ENCODE measurements at regions of chr13 and their contacts with region 1.

Region 1: GRCh38 chr13:25286969-25287961 is at the start of gene MTMR6:
- DNase-seq: peak; percentile 95
- H3K4me3 Mint-ChIP-seq: peak within 1 kb of the TSS; percentile 93
- H3K27ac Mint-ChIP-seq: peak within 1 kb of the TSS; percentile 92
- H3K4me1 Mint-ChIP-seq: peaks cover 40% of the 10 kb centered on the region
- H3K27me3 Mint-ChIP-seq: peaks cover 3% of the 10 kb centered on the region
- total RNA-seq, gene MTMR6: 5.5 to 5.7 TPM

Region 2: DNA sequence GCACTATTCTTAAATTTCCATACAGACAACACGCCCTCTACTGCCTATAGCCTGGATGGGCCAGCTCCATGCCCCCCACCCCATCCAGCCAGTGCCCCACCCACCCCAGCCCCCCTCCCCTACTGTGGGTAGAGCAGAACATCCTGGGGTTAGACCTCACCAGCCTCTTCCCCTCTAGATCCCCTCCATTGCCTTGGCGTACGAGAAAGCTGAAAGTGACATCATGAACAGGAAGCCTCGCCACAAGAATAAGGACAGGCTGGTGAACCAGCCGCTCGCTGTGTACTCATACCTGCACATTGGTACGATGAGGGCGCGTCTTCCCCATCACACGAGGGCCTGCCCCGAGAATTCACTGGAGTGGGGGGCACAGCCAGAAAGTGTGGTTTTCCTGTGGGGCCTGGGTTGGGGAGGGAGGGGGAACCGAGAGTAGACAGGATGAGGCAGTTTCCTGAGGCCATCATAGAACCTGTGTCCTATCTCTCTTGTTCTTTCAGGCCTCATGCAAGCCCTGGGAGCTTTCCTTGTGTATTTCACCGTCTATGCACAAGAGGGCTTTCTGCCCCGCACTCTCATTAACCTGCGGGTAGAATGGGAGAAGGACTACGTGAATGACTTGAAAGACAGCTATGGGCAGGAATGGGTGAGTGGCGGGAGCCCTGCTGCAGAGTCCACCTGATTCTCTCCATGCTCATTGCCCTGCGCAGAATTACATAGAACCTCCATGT is 577.9 kb before region 1 on chr13:
- CTCF ChIA-PET with region 1: no interaction called
- intact Hi-C with region 1: loop called (anchors 5 kb)
- DNase-seq: peak; percentile 91
- H3K4me3 Mint-ChIP-seq: peak overlapping the region; percentile 17
- H3K27ac Mint-ChIP-seq: peak overlapping the region; percentile 28
- H3K4me1 Mint-ChIP-seq: peaks cover 17% of the 10 kb centered on the region
- H3K27me3 Mint-ChIP-seq: no peaks in the 10 kb centered on the region

Region 3: GRCh38 chr13:25018729-25019115 is 268.5 kb before region 1 on chr13:
- CTCF ChIA-PET with region 1: no interaction called
- intact Hi-C with region 1: loop called (anchors 10 kb)
- DNase-seq: peak; percentile 19
- H3K4me3 Mint-ChIP-seq: peak overlapping the region; percentile 32
- H3K27ac Mint-ChIP-seq: no peak overlapping the region
- H3K4me1 Mint-ChIP-seq: peaks cover 6% of the 10 kb centered on the region
- H3K27me3 Mint-ChIP-seq: peaks cover 32% of the 10 kb centered on the region

Region 4: GRCh38 chr13:25232937-25233515 is 54.2 kb before region 1 on chr13:
- CTCF ChIA-PET with region 1: interaction called, 9 read pairs
- intact Hi-C with region 1: loop called (anchors 1 kb)
- DNase-seq: no peak
- H3K4me3 Mint-ChIP-seq: no peak overlapping the region
- H3K27ac Mint-ChIP-seq: no peak overlapping the region
- H3K4me1 Mint-ChIP-seq: peaks cover 2% of the 10 kb centered on the region
- H3K27me3 Mint-ChIP-seq: peaks cover 4% of the 10 kb centered on the region

Region 5: GRCh38 chr13:25301347-25302047 is 14.2 kb after region 1 on chr13 and contains the start of gene NUP58:
- CTCF ChIA-PET with region 1: interaction called, 13 read pairs
- intact Hi-C with region 1: loop called (anchors 1 kb)
- DNase-seq: peak; percentile 96
- H3K4me3 Mint-ChIP-seq: peak within 1 kb of the TSS; percentile 94
- H3K27ac Mint-ChIP-seq: peak within 1 kb of the TSS; percentile 93
- H3K4me1 Mint-ChIP-seq: peaks cover 40% of the 10 kb centered on the region
- H3K27me3 Mint-ChIP-seq: no peaks in the 10 kb centered on the region
- total RNA-seq, gene NUP58: 91.9 to 93.0 TPM

Measured in activated naive CD4-positive, alpha-beta T cell treated with anti-CD3 and anti-CD28 coated beads for 36 hours (primary cell).